SK-N-SH (cell line): ENCODE measurements at regions of chr4 and their contacts with region 1.

Region 1: DNA sequence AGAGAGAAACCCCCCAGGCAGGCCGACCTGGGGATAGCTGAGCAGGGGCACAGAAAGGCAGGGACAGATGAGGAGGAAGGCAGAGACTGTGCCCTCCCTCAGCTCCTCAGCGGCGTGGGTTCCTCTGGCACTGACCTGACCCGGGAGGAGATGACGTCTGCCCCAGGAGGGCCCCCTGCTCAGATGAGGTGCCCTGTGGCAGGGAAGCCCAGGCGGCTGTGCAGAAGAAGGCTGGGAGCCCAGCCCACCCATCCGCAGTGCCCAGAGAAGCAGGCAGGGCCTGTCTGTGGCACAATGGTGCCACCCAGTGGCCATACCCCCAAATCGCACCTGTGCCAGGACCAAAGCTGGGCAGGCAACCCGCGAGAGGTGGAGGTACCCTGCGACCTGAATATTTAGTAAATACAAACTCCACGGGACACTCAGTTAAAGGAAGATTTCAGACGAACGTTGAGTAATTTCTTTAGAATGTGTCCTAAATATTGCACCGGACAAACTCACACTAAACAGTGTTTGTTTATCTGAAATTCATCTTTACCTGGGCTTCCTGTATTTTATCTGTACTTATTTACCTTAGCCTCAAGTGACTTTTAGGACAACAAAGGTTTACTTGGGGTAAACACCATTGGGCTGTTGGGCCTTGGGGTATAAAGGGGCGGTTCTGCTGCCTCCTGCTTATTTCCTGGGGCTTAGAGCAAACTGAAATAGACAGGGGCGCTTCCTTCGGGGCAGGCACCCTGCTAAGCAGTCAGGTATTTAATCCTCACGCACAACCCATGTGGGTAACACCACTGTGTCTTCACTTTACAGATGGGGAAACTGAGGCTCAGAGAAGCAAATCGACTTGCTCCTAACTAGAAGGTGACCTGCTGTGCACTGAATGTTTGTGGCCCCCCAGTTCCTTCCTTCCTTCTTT is 46.5 kb upstream of the HMX1 start:
- DNase-seq: peak; percentile 93
- H3K4me3 ChIP-seq: no peak overlapping the region
- H3K27ac ChIP-seq: no peak overlapping the region
- H3K4me1 ChIP-seq: no peaks in the 10 kb centered on the region; a peak in 1 of 4 replicates
- H3K27me3 ChIP-seq: no peaks in the 10 kb centered on the region
- CTCF ChIP-seq: peak; percentile 64
- EP300 ChIP-seq: no peak
- RAD21 ChIP-seq: peak; percentile 92

Region 2: DNA sequence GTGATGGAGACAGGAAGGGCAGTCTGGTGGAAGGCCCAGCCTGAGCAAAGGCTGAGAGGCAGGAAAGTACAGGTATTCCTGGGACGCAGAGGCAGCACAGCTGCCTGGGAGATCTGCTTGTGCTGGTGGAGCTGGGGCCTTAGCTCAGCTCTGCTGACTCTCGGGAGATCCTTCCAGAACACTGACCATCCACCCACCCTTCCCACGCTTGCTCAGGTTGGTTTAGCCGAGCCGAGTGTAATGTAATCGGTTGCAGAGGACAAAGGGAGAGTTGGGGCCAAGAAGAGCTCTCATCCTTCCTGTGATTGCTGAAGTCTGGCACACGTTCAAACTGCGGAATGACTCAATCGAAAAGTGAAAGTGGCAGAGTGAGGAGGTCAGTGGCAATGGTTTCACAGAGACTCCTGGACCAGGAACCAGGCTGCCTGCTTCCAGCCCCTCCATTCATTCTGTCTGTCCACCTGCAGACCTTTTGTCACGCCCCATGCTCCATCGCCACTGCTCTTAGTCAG is 381.0 kb before region 1 on chr4:
- CTCF ChIA-PET with region 1: no interaction called
- POLR2A ChIA-PET with region 1: no interaction called
- DNase-seq: no peak
- H3K4me3 ChIP-seq: no peak overlapping the region
- H3K27ac ChIP-seq: peak overlapping the region in 1 of 2 experiments; percentile 42; a peak in 1 of 4 replicates
- H3K4me1 ChIP-seq: peaks cover 0 to 7% of the 10 kb centered on the region in 2 experiments; a peak in 2 of 4 replicates
- H3K27me3 ChIP-seq: no peaks in the 10 kb centered on the region
- CTCF ChIP-seq: no peak
- EP300 ChIP-seq: no peak
- RAD21 ChIP-seq: no peak

Region 3: GRCh38 chr4:8599657-8600056 is 318.5 kb before region 1 on chr4:
- CTCF ChIA-PET with region 1: interaction called, 11 read pairs
- POLR2A ChIA-PET with region 1: no interaction called
- DNase-seq: no peak
- H3K4me3 ChIP-seq: no peak overlapping the region
- H3K27ac ChIP-seq: no peak overlapping the region
- H3K4me1 ChIP-seq: peaks cover 0 to 30% of the 10 kb centered on the region in 2 experiments; a peak in 1 of 4 replicates
- H3K27me3 ChIP-seq: no peaks in the 10 kb centered on the region
- CTCF ChIP-seq: no peak
- EP300 ChIP-seq: no peak
- RAD21 ChIP-seq: no peak

Region 4: GRCh38 chr4:8615921-8616785 is 302.0 kb before region 1 on chr4:
- CTCF ChIA-PET with region 1: interaction called, 89 read pairs
- POLR2A ChIA-PET with region 1: no interaction called
- DNase-seq: peak; percentile 76
- H3K4me3 ChIP-seq: no peak overlapping the region
- H3K27ac ChIP-seq: no peak overlapping the region
- H3K4me1 ChIP-seq: peaks cover 0 to 13% of the 10 kb centered on the region in 2 experiments; a peak in 1 of 4 replicates
- H3K27me3 ChIP-seq: peaks cover 10% of the 10 kb centered on the region; the same call in 1 of the 2 replicates
- CTCF ChIP-seq: no peak
- EP300 ChIP-seq: no peak; a peak in 1 of 4 replicates
- RAD21 ChIP-seq: no peak

Region 5: GRCh38 chr4:8681391-8681790 is 236.7 kb before region 1 on chr4:
- CTCF ChIA-PET with region 1: interaction called, 11 read pairs
- POLR2A ChIA-PET with region 1: no interaction called
- DNase-seq: no peak
- H3K4me3 ChIP-seq: no peak overlapping the region
- H3K27ac ChIP-seq: no peak overlapping the region
- H3K4me1 ChIP-seq: peaks cover 0 to 16% of the 10 kb centered on the region in 2 experiments; a peak in 1 of 4 replicates
- H3K27me3 ChIP-seq: no peaks in the 10 kb centered on the region
- CTCF ChIP-seq: no peak
- EP300 ChIP-seq: no peak
- RAD21 ChIP-seq: no peak

Region 6: DNA sequence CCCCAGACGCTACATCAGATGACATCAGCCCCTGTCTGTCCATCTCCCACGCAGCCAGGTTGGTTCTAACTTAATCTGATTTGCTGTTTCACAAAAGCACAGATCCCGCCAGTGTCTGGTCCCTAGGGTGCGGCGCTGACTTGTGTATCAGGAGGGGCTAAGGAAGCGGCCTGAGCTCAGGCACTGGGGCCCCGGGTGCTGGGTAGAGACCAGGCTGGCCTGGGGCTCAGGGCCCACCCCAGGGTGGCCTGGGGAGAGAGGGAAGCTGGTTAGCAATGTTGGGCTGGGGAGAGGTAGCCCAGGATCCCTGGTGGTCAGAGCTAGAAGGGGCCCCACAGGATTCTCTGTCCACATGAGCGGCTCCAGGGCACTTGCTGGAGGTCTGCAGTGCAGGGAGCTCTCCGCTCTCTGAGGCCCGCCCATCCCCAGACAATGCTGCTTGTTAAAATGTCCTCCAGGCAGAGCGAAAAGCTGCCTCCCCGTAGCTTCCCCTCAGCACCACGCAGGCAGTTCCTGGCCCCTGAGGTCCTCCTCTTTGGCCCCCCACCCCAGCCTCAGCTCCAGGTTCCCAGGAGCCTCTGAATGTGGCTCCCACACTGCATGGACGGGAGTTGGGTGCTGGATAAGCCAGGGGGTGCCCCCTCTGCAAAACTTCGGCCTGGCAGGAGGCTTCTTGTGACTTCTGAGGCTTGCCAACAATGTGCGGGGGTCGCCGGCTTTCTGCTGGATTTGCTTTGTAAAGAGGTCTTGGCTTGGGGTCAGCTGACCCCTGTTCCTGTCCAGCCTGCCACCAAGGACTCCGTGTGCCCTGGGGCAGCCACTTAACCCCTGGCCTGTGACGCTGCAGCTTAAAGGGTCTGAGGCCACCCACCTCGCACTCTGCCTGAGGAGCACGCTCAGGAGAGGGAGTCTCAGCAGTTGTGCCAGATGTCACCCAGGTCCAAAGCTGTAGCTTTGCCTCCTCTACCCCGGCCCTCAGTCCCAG is 212.7 kb before region 1 on chr4:
- CTCF ChIA-PET with region 1: interaction called, 10 read pairs
- POLR2A ChIA-PET with region 1: no interaction called
- DNase-seq: no peak
- H3K4me3 ChIP-seq: no peak overlapping the region
- H3K27ac ChIP-seq: no peak overlapping the region; a peak in 1 of 4 replicates
- H3K4me1 ChIP-seq: peaks cover 0 to 30% of the 10 kb centered on the region in 2 experiments; a peak in 1 of 4 replicates
- H3K27me3 ChIP-seq: no peaks in the 10 kb centered on the region
- CTCF ChIP-seq: no peak
- EP300 ChIP-seq: no peak
- RAD21 ChIP-seq: no peak

Region 7: DNA sequence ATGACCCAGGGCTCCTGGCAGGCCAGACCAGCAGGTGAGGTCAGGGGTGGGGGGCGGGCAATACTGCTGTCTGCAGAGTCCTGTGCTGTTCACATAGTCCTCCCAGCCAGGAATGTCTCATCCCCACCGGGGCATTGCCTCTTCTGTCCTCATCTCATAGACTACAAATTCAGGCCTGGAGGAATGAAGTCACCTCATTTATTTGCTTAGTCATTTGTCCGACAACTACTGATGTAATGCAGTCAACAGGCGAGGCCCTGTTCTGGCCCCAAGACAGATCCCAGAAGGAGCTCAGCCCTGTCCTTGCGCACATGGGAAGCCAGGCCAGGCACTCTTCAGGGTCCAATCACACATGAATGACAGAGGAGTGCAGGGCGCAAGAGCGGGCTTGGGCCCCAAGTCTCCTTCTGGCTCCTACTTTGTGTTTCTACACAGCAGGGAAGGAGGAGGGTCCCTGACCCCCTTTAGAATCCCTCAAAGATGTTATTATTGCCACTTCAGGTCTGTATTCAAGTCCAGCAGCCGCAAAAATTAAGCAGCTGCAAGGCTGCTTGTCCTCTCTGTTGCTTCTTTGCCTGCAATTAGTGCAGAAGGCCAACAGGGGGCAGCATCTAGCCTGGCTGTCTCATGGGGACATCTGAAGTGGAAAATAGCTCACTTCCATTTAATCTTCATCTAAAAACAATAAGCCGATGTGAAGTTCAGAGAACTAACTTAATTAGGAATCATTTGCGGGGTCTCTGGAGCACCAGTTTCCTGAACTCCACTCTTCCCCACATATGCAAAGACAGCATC is 31.3 kb before region 1 on chr4:
- CTCF ChIA-PET with region 1: interaction called, 64 read pairs
- POLR2A ChIA-PET with region 1: no interaction called
- DNase-seq: no peak
- H3K4me3 ChIP-seq: no peak overlapping the region
- H3K27ac ChIP-seq: no peak overlapping the region
- H3K4me1 ChIP-seq: no peaks in the 10 kb centered on the region
- H3K27me3 ChIP-seq: no peaks in the 10 kb centered on the region
- CTCF ChIP-seq: peak; percentile 20; the same call in 1 of the 2 replicates
- EP300 ChIP-seq: no peak
- RAD21 ChIP-seq: no peak

Region 8: GRCh38 chr4:8940792-8941491 is 22.8 kb after region 1 on chr4:
- CTCF ChIA-PET with region 1: interaction called, 13 read pairs
- POLR2A ChIA-PET with region 1: no interaction called
- DNase-seq: no peak
- H3K4me3 ChIP-seq: no peak overlapping the region; a peak in 1 of 4 replicates
- H3K27ac ChIP-seq: no peak overlapping the region
- H3K4me1 ChIP-seq: no peaks in the 10 kb centered on the region
- H3K27me3 ChIP-seq: no peaks in the 10 kb centered on the region; the same call in 1 of the 2 replicates
- CTCF ChIP-seq: peak; percentile 46
- EP300 ChIP-seq: no peak
- RAD21 ChIP-seq: no peak; the same call in 1 of the 2 replicates